ENCODE measurements at regions of chr3 and their contacts with region 1.

Region 1: DNA sequence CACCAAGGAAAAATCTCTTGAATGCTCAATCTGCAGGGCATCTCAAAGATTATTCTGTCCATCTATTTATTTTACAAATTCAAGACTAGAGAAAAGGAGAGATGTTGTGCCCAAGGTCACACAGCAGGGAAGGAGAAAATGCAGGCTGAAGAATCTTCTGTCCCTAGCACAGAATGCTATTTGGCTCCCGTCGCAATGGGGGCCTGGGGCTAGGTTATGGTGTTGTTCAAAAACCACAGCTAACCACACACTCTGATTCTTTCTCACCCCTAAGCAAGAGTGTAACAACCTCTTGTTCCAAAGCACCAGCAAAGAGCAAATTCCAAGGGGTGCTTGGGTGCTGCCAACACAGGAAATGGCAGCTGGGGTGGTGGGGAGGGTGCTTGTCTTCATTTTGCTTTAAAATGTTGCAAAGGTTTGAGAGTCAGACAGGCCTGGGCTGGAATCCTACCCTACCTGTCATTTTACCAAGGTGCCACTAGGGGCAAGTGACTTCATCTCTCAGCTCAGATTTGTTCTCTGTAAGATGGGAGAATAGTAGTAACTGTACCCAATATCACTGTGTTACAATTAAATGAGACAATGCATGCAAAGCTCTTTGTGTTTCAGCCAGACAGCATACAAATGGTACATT is 112.5 kb downstream of the ADAMTS9 start:
- DNase-seq: no peak
- H3K4me3 ChIP-seq: no peak overlapping the region
- H3K27ac ChIP-seq: no peak overlapping the region
- H3K4me1 ChIP-seq: peaks cover 0 to 5% (median 0%) of the 10 kb centered on the region in 4 experiments; a peak in 2 of 7 replicates
- H3K27me3 ChIP-seq: no peaks in the 10 kb centered on the region
- CTCF ChIP-seq: peak; percentile 25 to 77 (median 40)
- EP300 ChIP-seq: no peak
- POLR2A ChIP-seq: no peak
- RAD21 ChIP-seq: peak; percentile 53 to 65

Region 2: DNA sequence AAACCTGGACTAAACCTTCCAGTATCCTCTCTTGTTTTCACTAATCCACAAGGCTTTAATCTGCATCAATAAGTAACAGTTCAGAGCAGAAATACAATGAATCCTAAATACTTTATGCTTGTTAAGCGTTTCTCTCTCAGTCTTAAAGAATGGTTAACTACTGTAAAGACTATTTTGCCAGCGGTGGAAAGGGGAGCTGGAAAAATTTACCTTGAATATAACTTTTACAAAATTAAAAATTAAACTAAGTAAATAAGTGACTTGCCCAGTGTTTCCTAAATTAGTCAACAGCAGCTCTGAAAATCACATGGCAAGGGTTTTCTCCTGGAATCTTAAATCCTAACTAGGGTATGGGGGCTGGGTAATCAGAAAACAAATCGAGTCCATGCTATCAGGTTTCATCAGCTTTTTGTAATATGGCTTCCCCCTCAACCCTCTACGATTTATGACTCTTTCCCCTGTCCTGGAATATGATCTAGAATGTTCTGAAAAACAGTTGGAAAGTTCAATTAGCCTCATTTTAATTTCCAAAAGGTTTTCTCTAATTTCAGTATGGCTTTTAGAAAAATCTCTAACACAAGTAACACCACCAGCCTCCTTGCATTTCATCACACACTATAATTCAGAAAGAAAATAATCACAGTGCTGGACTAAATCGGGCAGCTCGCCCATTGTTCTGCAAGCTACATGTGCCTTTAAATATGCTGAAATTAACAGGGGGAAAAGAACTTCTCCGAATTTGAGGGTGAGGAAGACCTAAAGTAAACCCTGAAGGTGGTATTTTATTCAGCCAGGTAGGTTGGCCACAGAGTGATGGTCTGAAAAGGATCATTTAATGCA is 21.0 kb before region 1 on chr3:
- CTCF ChIA-PET with region 1: interaction called, 17 read pairs
- POLR2A ChIA-PET with region 1: no interaction called
- DNase-seq: no peak
- H3K4me3 ChIP-seq: no peak overlapping the region
- H3K27ac ChIP-seq: no peak overlapping the region
- H3K4me1 ChIP-seq: no peaks in the 10 kb centered on the region
- H3K27me3 ChIP-seq: no peaks in the 10 kb centered on the region
- CTCF ChIP-seq: no peak
- EP300 ChIP-seq: no peak
- POLR2A ChIP-seq: no peak
- RAD21 ChIP-seq: no peak

Region 3: DNA sequence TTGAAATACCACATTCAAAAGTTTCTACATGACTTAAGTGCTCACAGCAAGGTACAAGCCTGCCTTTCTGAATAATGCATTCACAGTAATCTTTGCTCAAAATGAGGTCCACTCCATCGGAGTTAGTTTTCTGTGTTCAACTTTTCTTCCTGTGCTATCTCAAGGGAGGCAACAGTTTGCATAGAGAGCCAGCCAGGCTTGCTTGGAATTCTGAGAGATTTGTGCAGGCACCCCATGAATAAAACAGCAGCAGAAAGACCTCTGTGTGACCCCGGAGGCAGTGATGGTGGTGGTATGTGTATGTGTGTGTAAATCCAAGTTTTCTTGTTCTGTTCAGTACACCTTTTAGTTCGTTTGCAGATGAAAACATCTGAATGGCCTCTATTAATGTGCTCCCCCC is 11.6 kb before region 1 on chr3:
- CTCF ChIA-PET with region 1: interaction called, 19 read pairs
- POLR2A ChIA-PET with region 1: no interaction called
- DNase-seq: no peak
- H3K4me3 ChIP-seq: no peak overlapping the region
- H3K27ac ChIP-seq: no peak overlapping the region
- H3K4me1 ChIP-seq: 0 out of 7 replicates have a peak, but pooled peaks cover 0 to 3% (median 0%) of the 10 kb centered on the region in 4 experiments
- H3K27me3 ChIP-seq: no peaks in the 10 kb centered on the region
- CTCF ChIP-seq: no peak
- EP300 ChIP-seq: no peak
- POLR2A ChIP-seq: no peak
- RAD21 ChIP-seq: no peak

Region 4: GRCh38 chr3:64588380-64588779 is 13.1 kb after region 1 on chr3:
- CTCF ChIA-PET with region 1: interaction called, 37 read pairs
- POLR2A ChIA-PET with region 1: interaction called, 3 read pairs
- DNase-seq: no peak
- H3K4me3 ChIP-seq: no peak overlapping the region
- H3K27ac ChIP-seq: no peak overlapping the region
- H3K4me1 ChIP-seq: peaks cover 0 to 8% (median 2%) of the 10 kb centered on the region in 4 experiments; a peak in 4 of 7 replicates
- H3K27me3 ChIP-seq: no peaks in the 10 kb centered on the region
- CTCF ChIP-seq: no peak
- EP300 ChIP-seq: no peak
- POLR2A ChIP-seq: no peak
- RAD21 ChIP-seq: no peak

Region 5: GRCh38 chr3:64595253-64595694 is 19.9 kb after region 1 on chr3:
- CTCF ChIA-PET with region 1: interaction called, 24 read pairs
- POLR2A ChIA-PET with region 1: no interaction called
- DNase-seq: no peak
- H3K4me3 ChIP-seq: no peak overlapping the region
- H3K27ac ChIP-seq: no peak overlapping the region
- H3K4me1 ChIP-seq: no peaks in the 10 kb centered on the region
- H3K27me3 ChIP-seq: no peaks in the 10 kb centered on the region
- CTCF ChIP-seq: no peak
- EP300 ChIP-seq: no peak
- POLR2A ChIP-seq: no peak
- RAD21 ChIP-seq: no peak